ENCODE measurements at regions of chr3 and their contacts with region 1.

Region 1: GRCh38 chr3:30658328-30659052 is 52.1 kb downstream of the TGFBR2 start:
- DNase-seq: no peak
- ATAC-seq: peak; percentile 87
- H3K4me3 Mint-ChIP-seq: peak overlapping the region; percentile 12
- H3K27ac Mint-ChIP-seq: peak overlapping the region; percentile 82
- H3K4me1 Mint-ChIP-seq: peaks cover 94% of the 10 kb centered on the region
- H3K27me3 Mint-ChIP-seq: no peaks in the 10 kb centered on the region
- CTCF ChIP-seq: no peak

Region 2: DNA sequence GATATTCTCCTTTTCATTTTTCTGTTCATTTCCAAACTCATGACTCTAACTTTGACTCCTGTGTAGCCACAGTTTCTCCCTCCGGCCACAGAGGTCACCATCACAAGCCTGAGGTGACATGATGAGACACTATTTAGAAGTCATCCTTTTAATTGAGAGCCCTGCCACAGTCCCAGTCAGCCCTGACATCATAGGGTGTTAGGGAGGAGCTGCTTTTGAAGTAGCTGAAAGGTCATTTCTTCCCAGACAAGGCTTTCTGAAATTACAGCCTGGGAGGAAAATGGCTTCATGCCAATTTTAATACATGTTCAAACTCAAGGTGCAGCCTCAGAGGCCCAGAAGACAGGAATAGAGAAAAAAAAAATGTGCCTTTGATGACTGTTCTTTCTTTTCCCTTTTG is 584.9 kb before region 1 on chr3:
- CTCF ChIA-PET with region 1: no interaction called
- POLR2A ChIA-PET with region 1: no interaction called
- intact Hi-C with region 1: no loop called
- DNase-seq: no peak
- ATAC-seq: no peak
- H3K4me3 Mint-ChIP-seq: no peak overlapping the region
- H3K27ac Mint-ChIP-seq: no peak overlapping the region
- H3K4me1 Mint-ChIP-seq: no peaks in the 10 kb centered on the region
- H3K27me3 Mint-ChIP-seq: no peaks in the 10 kb centered on the region
- CTCF ChIP-seq: no peak

Region 3: DNA sequence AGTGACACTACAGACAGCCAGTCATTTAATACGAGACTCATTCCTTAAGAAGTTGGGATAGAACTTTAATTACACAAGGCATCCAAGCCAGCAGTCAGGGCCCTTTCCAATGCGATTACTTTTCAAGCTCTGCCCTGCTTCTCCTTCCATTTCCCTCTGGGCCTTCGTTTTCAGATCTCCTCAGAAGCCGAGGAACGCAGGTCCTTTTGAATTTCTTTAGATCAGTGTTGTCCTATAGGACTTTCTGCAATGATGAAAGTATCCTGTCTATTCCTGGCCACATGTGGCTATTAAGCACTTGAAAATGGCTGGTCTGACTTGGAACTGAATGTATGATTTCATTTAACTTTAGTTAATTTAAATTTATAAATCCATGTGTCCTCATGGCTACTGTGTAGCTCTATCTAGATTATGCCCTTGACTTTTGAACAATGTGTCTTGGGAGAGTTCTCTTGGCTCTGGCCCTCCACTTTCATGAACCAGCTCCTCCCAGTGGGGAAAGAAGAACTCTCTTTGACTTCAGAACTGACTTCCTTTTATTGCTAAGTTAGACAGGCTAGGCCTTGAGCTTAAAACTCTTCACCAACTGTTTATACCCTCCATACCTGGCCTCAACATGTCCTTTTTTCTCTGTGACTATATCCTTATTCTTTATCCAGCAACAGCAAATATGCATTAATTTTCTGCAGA is 29.4 kb before region 1 on chr3:
- CTCF ChIA-PET with region 1: interaction called, 11 read pairs
- POLR2A ChIA-PET with region 1: interaction called, 13 read pairs
- intact Hi-C with region 1: no loop called
- DNase-seq: no peak
- ATAC-seq: peak; percentile 52
- H3K4me3 Mint-ChIP-seq: peak overlapping the region; percentile 49
- H3K27ac Mint-ChIP-seq: peak overlapping the region; percentile 91
- H3K4me1 Mint-ChIP-seq: peaks cover 94% of the 10 kb centered on the region
- H3K27me3 Mint-ChIP-seq: no peaks in the 10 kb centered on the region
- CTCF ChIP-seq: no peak

Region 4: GRCh38 chr3:30634761-30635735 is 23.4 kb before region 1 on chr3:
- CTCF ChIA-PET with region 1: interaction called, 11 read pairs
- POLR2A ChIA-PET with region 1: interaction called, 17 read pairs
- intact Hi-C with region 1: loop called (anchors 1 kb)
- DNase-seq: no peak
- ATAC-seq: no peak
- H3K4me3 Mint-ChIP-seq: peak overlapping the region; percentile 48
- H3K27ac Mint-ChIP-seq: peak overlapping the region; percentile 91
- H3K4me1 Mint-ChIP-seq: peaks cover 99% of the 10 kb centered on the region
- H3K27me3 Mint-ChIP-seq: no peaks in the 10 kb centered on the region
- CTCF ChIP-seq: no peak

Region 5: GRCh38 chr3:30644593-30645012 is 13.9 kb before region 1 on chr3:
- CTCF ChIA-PET with region 1: interaction called, 7 read pairs
- POLR2A ChIA-PET with region 1: interaction called, 24 read pairs
- intact Hi-C with region 1: loop called (anchors 1 kb)
- DNase-seq: no peak
- ATAC-seq: peak; percentile 38
- H3K4me3 Mint-ChIP-seq: peak overlapping the region; percentile 68
- H3K27ac Mint-ChIP-seq: peak overlapping the region; percentile 91
- H3K4me1 Mint-ChIP-seq: peaks cover 98% of the 10 kb centered on the region
- H3K27me3 Mint-ChIP-seq: no peaks in the 10 kb centered on the region
- CTCF ChIP-seq: no peak

Region 6: DNA sequence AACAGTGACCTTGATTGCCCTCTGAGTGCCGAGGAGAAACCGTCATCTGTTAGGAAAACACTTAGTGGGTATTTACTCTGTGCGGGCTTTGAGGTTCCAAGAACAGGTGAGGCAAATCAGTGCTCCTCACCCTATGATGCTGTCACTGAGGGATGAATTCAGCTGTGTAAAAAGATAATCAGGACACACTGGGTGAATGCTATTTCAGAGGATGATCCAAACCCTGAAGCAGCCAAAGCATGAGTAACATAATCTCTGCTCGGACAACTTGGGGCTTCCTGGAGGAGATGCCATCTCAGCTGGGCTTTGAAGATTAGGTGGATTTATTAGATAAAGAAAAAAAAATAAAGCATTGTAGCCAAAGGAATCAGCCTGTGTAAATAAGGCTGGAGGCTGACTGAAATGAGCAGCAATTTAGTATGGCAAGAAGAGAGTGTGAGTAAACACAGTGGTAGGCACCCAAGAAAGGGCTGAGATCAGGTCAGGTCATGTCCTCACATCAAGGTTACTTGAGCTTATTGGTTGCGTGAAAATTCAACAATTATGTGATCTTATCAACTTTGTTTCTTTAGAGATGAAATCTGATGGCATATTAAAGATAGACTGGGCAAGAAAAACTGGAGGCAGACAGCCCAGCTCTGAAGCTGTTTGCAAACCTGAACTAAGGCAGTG is 246.6 kb after region 1 on chr3:
- CTCF ChIA-PET with region 1: no interaction called
- POLR2A ChIA-PET with region 1: no interaction called
- intact Hi-C with region 1: no loop called
- DNase-seq: no peak
- ATAC-seq: no peak
- H3K4me3 Mint-ChIP-seq: no peak overlapping the region
- H3K27ac Mint-ChIP-seq: no peak overlapping the region
- H3K4me1 Mint-ChIP-seq: no peaks in the 10 kb centered on the region
- H3K27me3 Mint-ChIP-seq: no peaks in the 10 kb centered on the region
- CTCF ChIP-seq: no peak